Common myeloid progenitor, CD34-positive (primary cell): ENCODE measurements at regions of chr18 and their contacts with region 1.

Region 1: DNA sequence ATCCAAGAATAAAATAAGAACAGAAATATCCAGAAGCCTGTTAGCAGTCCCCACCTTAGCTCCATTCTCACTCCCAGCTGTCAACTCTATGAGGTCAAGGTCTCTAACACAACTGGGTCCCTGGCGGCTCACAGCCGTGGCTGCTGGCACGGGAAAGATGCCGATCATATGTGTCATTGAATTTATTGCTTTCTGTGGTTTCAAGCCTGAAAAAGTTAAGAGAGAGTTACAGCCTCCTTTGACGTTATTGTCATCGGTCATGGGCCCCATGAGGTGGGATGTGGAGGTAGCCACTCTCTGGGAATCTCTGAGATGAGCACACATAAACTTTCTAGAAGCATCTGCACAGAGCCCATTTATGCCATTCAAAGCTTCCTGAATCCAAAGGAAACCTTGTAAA is 28.7 kb upstream of the CABLES1 start:
- DNase-seq: peak; percentile 22 to 60 (median 51)
- H3K4me3 ChIP-seq: peak overlapping the region in 1 of 7 experiments; percentile 10
- H3K27ac ChIP-seq: no peak overlapping the region
- H3K4me1 ChIP-seq: peaks cover 0 to 4% (median 0%) of the 10 kb centered on the region in 4 experiments
- H3K27me3 ChIP-seq: no peaks in the 10 kb centered on the region

Region 2: GRCh38 chr18:23126376-23127056 is 19.9 kb after region 1 on chr18:
- CTCF ChIA-PET with region 1: interaction called, 11 read pairs
- POLR2A ChIA-PET with region 1: no interaction called
- DNase-seq: no peak
- H3K4me3 ChIP-seq: no peak overlapping the region
- H3K27ac ChIP-seq: no peak overlapping the region
- H3K4me1 ChIP-seq: peaks cover 0 to 3% (median 0%) of the 10 kb centered on the region in 4 experiments
- H3K27me3 ChIP-seq: no peaks in the 10 kb centered on the region